Activated CD8-positive, alpha-beta T cell treated with anti-CD3 and anti-CD28 coated beads for 36 hours (primary cell): ENCODE measurements at regions of chr21 and their contacts with region 1.

Region 1: DNA sequence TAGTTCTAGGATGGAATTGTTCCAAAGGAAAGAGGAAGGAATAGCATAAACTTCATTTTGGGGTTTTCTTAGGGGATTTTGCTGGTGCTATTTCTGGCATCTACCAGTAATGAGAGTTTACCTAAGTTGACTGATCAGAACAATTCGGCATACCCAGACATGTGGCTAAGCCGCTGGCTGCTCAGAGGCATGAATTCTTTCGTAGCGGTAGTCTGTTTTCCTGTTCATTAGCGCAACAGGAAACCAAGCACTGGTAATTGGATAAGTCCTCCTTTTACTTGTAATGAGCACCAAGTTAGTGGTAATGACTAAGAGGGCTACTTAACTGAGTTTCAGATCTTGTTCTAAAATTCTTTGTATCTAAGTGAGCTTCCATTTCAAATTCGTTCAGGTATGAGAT is 38.6 kb downstream of the C21orf91 start:
- DNase-seq: peak; percentile 70
- ATAC-seq: peak; percentile 24
- H3K4me3 Mint-ChIP-seq: peak overlapping the region; percentile 28
- H3K27ac Mint-ChIP-seq: peak overlapping the region; percentile 85
- H3K4me1 Mint-ChIP-seq: peaks cover 92% of the 10 kb centered on the region
- H3K27me3 Mint-ChIP-seq: no peaks in the 10 kb centered on the region
- CTCF ChIP-seq: no peak

Region 2: GRCh38 chr21:17611414-17612022 is 169.0 kb before region 1 on chr21:
- CTCF ChIA-PET with region 1: no interaction called
- POLR2A ChIA-PET with region 1: interaction called, 8 read pairs
- intact Hi-C with region 1: loop called (anchors 10 kb)
- DNase-seq: peak; percentile 92
- ATAC-seq: peak; percentile 64
- H3K4me3 Mint-ChIP-seq: peak overlapping the region; percentile 83
- H3K27ac Mint-ChIP-seq: peak overlapping the region; percentile 95
- H3K4me1 Mint-ChIP-seq: peaks cover 32% of the 10 kb centered on the region
- H3K27me3 Mint-ChIP-seq: no peaks in the 10 kb centered on the region
- CTCF ChIP-seq: no peak

Region 3: GRCh38 chr21:17679002-17679600 is 101.4 kb before region 1 on chr21:
- CTCF ChIA-PET with region 1: interaction called, 7 read pairs
- POLR2A ChIA-PET with region 1: interaction called, 3 read pairs
- intact Hi-C with region 1: loop called (anchors 5 kb)
- DNase-seq: peak; percentile 15
- ATAC-seq: peak; percentile 87
- H3K4me3 Mint-ChIP-seq: no peak overlapping the region
- H3K27ac Mint-ChIP-seq: no peak overlapping the region
- H3K4me1 Mint-ChIP-seq: peaks cover 13% of the 10 kb centered on the region
- H3K27me3 Mint-ChIP-seq: no peaks in the 10 kb centered on the region
- CTCF ChIP-seq: peak; percentile 71

Region 4: GRCh38 chr21:17688912-17689874 is 91.3 kb before region 1 on chr21:
- CTCF ChIA-PET with region 1: interaction called, 4 read pairs
- POLR2A ChIA-PET with region 1: interaction called, 6 read pairs
- intact Hi-C with region 1: loop called (anchors 5 kb)
- DNase-seq: peak; percentile 72
- ATAC-seq: peak; percentile 39
- H3K4me3 Mint-ChIP-seq: no peak overlapping the region
- H3K27ac Mint-ChIP-seq: peak overlapping the region; percentile 20
- H3K4me1 Mint-ChIP-seq: peaks cover 27% of the 10 kb centered on the region
- H3K27me3 Mint-ChIP-seq: no peaks in the 10 kb centered on the region
- CTCF ChIP-seq: peak; percentile 36

Region 5: DNA sequence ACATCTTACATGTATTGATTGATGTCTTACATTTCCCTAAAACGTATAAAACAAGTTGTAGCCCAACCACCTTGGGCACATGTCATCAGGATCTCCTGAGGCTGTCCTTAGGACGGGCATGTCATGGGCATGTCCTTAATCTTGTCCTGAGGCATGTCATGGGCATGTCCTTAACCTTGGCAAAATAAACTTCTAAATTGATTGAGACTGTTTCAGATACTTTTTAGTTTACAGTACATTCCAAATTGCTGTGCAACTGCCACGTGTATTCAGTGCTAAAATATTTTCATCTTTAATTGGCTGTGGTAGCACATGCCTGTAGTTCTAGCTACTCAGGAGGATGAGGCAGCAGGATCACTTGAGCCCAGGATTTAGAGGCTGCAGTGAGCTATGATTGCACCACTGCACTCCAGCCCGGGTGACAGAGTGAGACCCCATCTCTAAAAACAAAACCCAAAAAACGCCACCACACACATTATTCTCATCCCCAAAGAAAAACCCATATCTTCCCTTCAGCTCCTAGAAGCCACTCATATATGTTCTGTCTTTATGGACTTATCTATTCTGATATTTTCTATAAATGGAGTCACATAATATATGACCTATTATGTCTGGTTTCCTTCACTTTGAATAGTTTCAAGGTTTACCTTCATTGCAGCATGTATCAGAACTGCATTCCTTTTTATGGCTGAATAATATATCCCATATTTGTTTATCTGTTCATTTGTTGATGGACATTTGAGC is 71.8 kb before region 1 on chr21:
- CTCF ChIA-PET with region 1: no interaction called
- POLR2A ChIA-PET with region 1: interaction called, 3 read pairs
- intact Hi-C with region 1: loop called (anchors 5 kb)
- DNase-seq: no peak
- ATAC-seq: peak; percentile 22
- H3K4me3 Mint-ChIP-seq: no peak overlapping the region
- H3K27ac Mint-ChIP-seq: no peak overlapping the region
- H3K4me1 Mint-ChIP-seq: peaks cover 20% of the 10 kb centered on the region
- H3K27me3 Mint-ChIP-seq: no peaks in the 10 kb centered on the region
- CTCF ChIP-seq: no peak

Region 6: DNA sequence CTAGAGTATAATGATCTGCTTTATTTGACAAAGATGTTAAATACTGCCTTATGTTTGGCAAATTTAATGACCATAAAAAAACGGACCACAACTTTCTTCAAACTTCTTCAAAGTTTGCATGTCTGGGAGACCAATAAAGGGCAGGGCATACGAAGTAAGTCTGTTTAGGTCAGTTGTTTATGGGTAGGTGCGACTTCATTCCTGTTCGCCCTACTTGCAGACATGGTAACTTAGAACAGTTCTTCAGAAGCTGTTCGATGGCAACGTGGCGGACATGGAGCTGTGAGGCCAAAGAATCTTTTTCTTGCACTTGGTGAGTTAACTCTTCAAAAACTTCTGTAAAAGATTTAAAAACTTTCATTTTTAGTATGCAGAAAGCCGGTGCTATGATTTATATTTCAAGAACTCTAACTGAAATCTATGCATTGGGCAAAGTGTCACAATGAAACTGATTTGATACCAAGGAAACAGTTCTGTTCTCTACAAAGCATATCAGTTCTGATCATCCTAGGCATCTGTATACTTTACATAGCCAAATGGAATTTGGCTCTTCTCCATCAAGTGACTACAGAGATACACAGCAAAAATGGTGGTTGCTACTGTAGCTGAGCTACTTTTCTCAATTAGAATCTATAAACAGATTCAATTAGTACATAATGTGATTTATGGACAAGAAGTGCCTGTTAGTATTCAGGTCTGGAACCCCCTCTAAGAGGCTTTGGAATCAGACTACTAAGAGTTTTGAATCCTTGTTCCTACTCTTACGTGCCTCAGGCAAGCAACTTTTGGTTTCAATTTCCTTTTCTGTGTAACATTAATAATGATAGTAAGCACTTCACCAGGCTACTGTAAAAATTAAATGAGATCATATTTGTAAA is 12.9 kb after region 1 on chr21:
- CTCF ChIA-PET with region 1: interaction called, 18 read pairs
- POLR2A ChIA-PET with region 1: interaction called, 16 read pairs
- intact Hi-C with region 1: no loop called
- DNase-seq: no peak
- ATAC-seq: peak; percentile 50
- H3K4me3 Mint-ChIP-seq: peak overlapping the region; percentile 67
- H3K27ac Mint-ChIP-seq: peak overlapping the region; percentile 94
- H3K4me1 Mint-ChIP-seq: peaks cover 75% of the 10 kb centered on the region
- H3K27me3 Mint-ChIP-seq: no peaks in the 10 kb centered on the region
- CTCF ChIP-seq: no peak

Region 7: GRCh38 chr21:17819114-17819876 is 38.8 kb after region 1 on chr21 and contains the start of gene C21orf91:
- CTCF ChIA-PET with region 1: interaction called, 11 read pairs
- POLR2A ChIA-PET with region 1: interaction called, 36 read pairs
- intact Hi-C with region 1: loop called (anchors 5 kb)
- DNase-seq: peak; percentile 92
- ATAC-seq: peak; percentile 87
- H3K4me3 Mint-ChIP-seq: peak within 1 kb of the TSS; percentile 85
- H3K27ac Mint-ChIP-seq: peak within 1 kb of the TSS; percentile 99
- H3K4me1 Mint-ChIP-seq: peaks cover 36% of the 10 kb centered on the region
- H3K27me3 Mint-ChIP-seq: no peaks in the 10 kb centered on the region
- CTCF ChIP-seq: no peak
- total RNA-seq, gene C21orf91: 32.5 to 32.6 TPM